ENCODE measurements at regions of chr2 and their contacts with region 1.

Region 1: GRCh38 chr2:64914735-64915509 is 74.3 kb upstream of the SLC1A4 start:
- DNase-seq: peak; percentile 79
- H3K4me3 ChIP-seq: no peak overlapping the region
- H3K27ac ChIP-seq: peak overlapping the region in 2 of 4 donors; percentile 17 to 30
- H3K4me1 ChIP-seq: peaks cover 0 to 9% (median 5%) of the 10 kb centered on the region in 4 donors
- H3K27me3 ChIP-seq: no peaks in the 10 kb centered on the region
- CTCF ChIP-seq: no peak
- EP300 ChIP-seq: no peak
- POLR2A ChIP-seq: no peak

Region 2: DNA sequence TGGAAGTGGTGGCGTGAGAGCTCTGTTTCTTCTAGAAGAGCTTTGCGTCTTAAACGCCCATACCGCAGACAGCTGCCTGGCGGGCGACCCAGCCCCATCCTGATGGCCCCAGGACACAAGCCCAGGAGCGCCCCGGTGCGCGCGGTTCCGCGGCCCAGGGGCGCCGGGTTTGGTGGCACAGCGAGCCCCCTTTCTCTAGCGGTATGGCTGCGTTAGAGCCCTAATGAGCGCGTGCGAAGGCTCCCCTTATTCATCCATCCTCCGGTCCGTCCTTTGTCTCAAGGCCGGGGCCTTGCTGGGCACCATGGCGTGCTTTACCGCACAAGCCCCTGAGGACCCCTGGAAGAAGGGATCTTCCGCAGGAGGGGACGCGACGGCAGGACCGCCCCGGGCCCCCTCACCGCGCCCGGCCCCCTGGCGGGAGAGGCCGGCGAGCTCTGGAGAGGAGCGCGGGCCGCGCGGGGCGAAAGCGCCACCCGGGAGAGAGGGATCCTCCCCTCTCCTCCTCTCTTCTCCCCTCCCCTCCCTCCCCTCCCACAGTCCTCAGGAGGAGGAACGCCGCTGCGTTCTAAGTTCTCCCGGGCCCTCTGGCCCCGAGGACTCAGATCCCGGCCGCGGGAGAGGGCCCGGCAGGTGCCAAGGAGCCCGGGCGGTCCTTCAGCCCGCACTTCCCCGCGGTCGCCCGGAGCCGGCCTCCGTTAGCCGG is 73.7 kb after region 1 on chr2:
- intact Hi-C with region 1: loop called (anchors 1 kb)
- DNase-seq: peak; percentile 88
- H3K4me3 ChIP-seq: peak overlapping the region; percentile 52 to 92 (median 82)
- H3K27ac ChIP-seq: peak overlapping the region; percentile 92 to 100 (median 98)
- H3K4me1 ChIP-seq: peaks cover 0 to 32% (median 25%) of the 10 kb centered on the region in 4 donors
- H3K27me3 ChIP-seq: no peaks in the 10 kb centered on the region
- CTCF ChIP-seq: peak; percentile 36 to 68 (median 56)
- EP300 ChIP-seq: no peak
- POLR2A ChIP-seq: peak; percentile 36 to 51

Region 3: GRCh38 chr2:65040400-65041261 is 125.7 kb after region 1 on chr2:
- intact Hi-C with region 1: loop called (anchors 1 kb)
- DNase-seq: peak; percentile 93
- H3K4me3 ChIP-seq: peak overlapping the region in 1 of 4 donors; percentile 23
- H3K27ac ChIP-seq: no peak overlapping the region
- H3K4me1 ChIP-seq: peaks cover 0 to 4% (median 0%) of the 10 kb centered on the region in 4 donors
- H3K27me3 ChIP-seq: no peaks in the 10 kb centered on the region
- CTCF ChIP-seq: peak; percentile 87 to 98 (median 96)
- EP300 ChIP-seq: no peak
- POLR2A ChIP-seq: no peak

Region 4: GRCh38 chr2:65186872-65187851 is 272.2 kb after region 1 on chr2:
- intact Hi-C with region 1: loop called (anchors 10 kb)
- DNase-seq: peak; percentile 89
- H3K4me3 ChIP-seq: no peak overlapping the region
- H3K27ac ChIP-seq: no peak overlapping the region
- H3K4me1 ChIP-seq: peaks cover 0 to 7% (median 3%) of the 10 kb centered on the region in 4 donors
- H3K27me3 ChIP-seq: no peaks in the 10 kb centered on the region
- CTCF ChIP-seq: peak; percentile 52 to 84 (median 72)
- EP300 ChIP-seq: no peak
- POLR2A ChIP-seq: no peak

Region 5: DNA sequence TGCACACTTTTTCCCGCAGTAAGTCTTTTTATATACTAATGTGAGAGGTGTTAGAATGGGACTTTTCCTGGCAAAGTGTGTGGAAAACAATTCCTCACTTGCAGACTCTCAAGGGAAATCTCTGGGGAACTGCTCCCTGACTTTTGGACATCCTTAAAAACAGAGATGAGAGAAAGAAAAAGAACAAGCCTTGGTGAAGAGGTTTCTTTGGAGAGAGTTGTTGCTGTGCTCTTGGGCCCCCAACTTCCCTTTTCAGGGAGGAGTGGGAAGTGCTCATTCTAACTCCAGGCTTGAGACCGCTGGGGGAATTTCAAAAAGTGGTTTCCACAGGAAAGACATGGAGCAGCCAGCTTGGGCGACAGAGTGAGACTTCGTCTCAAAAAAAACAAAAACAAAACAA is 660.1 kb after region 1 on chr2:
- intact Hi-C with region 1: loop called (anchors 5 kb)
- DNase-seq: no peak
- H3K4me3 ChIP-seq: no peak overlapping the region
- H3K27ac ChIP-seq: no peak overlapping the region
- H3K4me1 ChIP-seq: peaks cover 0 to 9% (median 0%) of the 10 kb centered on the region in 4 donors
- H3K27me3 ChIP-seq: no peaks in the 10 kb centered on the region
- CTCF ChIP-seq: no peak
- EP300 ChIP-seq: no peak
- POLR2A ChIP-seq: no peak